AG04449 (cell line): ENCODE measurements at regions of chr3 and their contacts with region 1.

Region 1: GRCh38 chr3:43695443-43695842 is 4.7 kb downstream of the ABHD5 start:
- DNase-seq: peak; percentile 37
- H3K4me3 ChIP-seq: no peak overlapping the region
- CTCF ChIP-seq: no peak

Region 2: GRCh38 chr3:43670635-43671522 is 24.6 kb before region 1 on chr3:
- CTCF ChIA-PET with region 1: no interaction called
- POLR2A ChIA-PET with region 1: no interaction called
- DNase-seq: no peak
- H3K4me3 ChIP-seq: no peak overlapping the region
- CTCF ChIP-seq: no peak

Region 3: DNA sequence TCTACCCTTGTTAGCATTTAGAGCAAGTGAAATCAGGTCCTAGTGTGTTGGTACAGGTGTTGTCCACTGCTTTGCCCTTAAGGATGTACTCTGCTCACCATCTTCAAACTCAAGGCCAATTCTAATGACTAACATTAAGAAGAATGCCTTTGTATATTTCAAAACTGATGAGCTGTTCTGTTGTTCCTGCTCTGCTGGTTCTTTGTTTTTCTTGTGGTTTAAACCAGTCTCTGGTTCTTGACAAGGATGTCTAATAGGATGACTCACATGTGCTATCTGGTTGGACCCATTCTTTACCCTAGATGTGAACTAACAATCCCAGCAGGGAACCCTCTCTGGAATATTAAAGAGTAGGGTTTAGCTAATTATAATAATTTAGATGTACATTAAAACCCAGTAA is 12.6 kb after region 1 on chr3:
- CTCF ChIA-PET with region 1: interaction called, 20 read pairs
- POLR2A ChIA-PET with region 1: interaction called, 3 read pairs
- DNase-seq: peak; percentile 71
- H3K4me3 ChIP-seq: no peak overlapping the region
- CTCF ChIP-seq: no peak

Region 4: DNA sequence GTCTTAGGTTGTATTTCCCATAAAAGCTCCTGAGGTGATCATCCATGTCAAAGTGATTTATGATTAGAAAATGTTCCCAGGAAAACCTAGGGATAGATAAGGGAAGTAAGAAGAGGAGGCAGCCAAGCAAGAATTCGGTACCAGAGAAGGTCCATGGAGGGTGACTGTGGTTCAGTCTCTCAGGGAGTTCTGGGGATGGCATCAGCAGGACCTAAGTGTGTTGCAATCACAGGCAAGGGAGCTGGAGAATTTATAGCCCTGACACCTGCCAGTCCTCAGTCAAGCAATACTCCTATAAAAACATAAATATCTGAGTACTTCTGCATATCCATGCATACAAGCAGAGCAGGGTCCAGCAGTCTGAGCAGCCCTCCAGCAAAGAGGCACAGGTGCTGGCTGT is 450.6 kb after region 1 on chr3:
- CTCF ChIA-PET with region 1: no interaction called
- POLR2A ChIA-PET with region 1: no interaction called
- DNase-seq: no peak
- H3K4me3 ChIP-seq: no peak overlapping the region
- CTCF ChIP-seq: no peak